ENCODE measurements at regions of chr6 and their contacts with region 1.

Region 1: DNA sequence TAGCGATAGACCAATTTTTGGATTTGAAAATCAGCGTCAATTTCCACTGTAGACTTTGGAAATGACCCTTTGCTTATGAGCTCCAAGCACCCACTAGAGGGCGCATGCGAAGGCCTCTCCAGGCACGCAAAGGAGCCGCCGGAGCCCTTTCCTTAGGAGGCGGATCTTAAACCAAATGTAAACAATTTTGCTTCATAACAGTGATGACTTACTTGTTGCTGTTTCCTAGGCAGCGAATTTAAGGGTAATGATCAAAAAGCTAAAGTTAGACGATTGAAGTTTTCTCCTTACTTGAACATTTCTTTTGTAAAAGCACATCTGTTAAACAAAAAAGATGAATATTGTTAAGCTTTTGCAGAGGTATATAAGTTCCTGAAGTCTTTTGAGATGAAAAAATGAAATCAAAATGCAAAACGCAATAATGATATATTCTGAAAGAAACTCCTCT is 29.2 kb upstream of the EXOC2 start:
- DNase-seq: peak; percentile 57 to 83 (median 66)
- ATAC-seq: peak in 3 of 4 donors; percentile 62 to 70 (median 64)
- H3K4me3 ChIP-seq: no peak overlapping the region
- H3K27ac ChIP-seq: no peak overlapping the region
- H3K4me1 ChIP-seq: peaks cover 0 to 9% (median 0%) of the 10 kb centered on the region in 12 donors
- H3K27me3 ChIP-seq: peaks cover 0 to 4% (median 0%) of the 10 kb centered on the region in 9 donors
- CTCF ChIP-seq: peak; percentile 79 to 97 (median 92)
- POLR2A ChIP-seq: no peak

Region 2: DNA sequence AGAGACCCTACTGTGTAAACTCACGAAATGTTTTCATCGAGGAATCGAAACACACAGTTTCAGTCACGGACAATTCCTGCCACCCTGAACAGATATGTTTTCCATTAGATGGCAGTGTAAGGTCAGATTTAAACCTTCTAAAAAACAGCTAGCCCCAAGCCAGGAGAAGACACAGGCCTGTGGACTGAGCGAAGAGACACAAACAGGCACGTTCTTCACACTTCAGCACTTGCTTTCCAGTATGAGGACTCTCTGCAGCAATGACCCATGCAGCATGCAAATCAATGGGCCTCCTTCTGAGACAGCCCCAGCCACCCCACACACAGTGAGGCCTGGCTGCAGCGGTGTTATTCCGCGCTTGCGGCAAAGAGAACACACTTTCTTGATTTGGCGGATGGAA is 97.1 kb before region 1 on chr6:
- intact Hi-C with region 1: loop called in 1 of 10 experiments (anchors 5 kb)
- DNase-seq: no peak
- ATAC-seq: peak; percentile 68 to 88 (median 76)
- H3K4me3 ChIP-seq: no peak overlapping the region
- H3K27ac ChIP-seq: peak overlapping the region in 1 of 12 donors; percentile 26
- H3K4me1 ChIP-seq: no peaks in the 10 kb centered on the region
- H3K27me3 ChIP-seq: no peaks in the 10 kb centered on the region
- CTCF ChIP-seq: peak in 7 of 12 donors; percentile 21 to 47 (median 35)
- POLR2A ChIP-seq: no peak

Region 3: DNA sequence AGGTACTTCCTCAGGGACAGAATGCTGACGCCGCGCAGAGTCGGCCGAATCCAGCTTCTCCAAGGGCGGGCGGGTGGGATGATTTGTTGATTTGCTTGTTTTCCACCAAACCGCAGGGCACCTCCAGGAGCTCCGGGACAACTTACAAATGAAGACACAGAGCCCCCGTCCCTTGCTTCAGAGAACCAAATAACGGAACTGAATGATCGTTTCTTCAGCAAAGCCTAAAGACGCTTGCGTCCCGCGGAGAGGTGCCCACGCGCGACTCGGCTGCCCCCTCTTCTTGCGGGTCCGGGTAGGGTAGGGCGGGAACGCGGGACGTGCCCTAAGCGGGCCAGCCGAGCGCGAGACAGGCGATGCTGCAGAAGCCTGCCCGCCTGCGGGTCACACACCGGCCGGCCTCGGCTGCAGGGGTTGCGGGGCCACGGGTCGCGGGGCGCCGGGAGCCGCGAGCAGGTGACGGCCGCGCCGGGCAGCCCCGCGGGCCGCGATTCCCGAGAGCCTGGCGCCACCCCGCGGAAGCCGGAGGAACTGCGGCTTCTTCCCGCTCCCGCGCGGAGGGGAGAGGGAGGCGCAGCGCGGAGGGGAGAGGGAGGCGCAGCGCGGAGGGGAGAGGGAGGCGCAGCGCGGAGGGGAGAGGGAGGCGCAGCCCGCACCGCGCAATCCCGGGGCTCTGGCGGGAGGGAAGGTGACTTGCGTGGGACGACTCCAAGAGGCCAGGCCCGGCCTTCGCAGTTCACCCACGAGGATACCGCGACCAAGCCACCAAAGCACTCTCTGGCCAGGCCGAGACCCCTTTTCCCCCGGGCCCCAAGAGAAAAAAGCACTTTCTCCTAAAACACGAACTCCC is 659.6 kb after region 1 on chr6:
- intact Hi-C with region 1: loop called in 3 of 10 experiments (anchors 5 to 10 kb)
- DNase-seq: peak in 1 of 5 donors; percentile 47
- ATAC-seq: peak; percentile 26 to 87 (median 70)
- H3K4me3 ChIP-seq: peak overlapping the region in 10 of 12 donors; percentile 10 to 46 (median 37)
- H3K27ac ChIP-seq: peak overlapping the region in 1 of 12 donors; percentile 84
- H3K4me1 ChIP-seq: peaks cover 0 to 50% (median 26%) of the 10 kb centered on the region in 12 donors
- H3K27me3 ChIP-seq: peaks cover 88 to 100% (median 97%) of the 10 kb centered on the region in 9 donors
- CTCF ChIP-seq: peak; percentile 62 to 94 (median 90)
- POLR2A ChIP-seq: no peak

Region 4: GRCh38 chr6:1396952-1397868 is 675.1 kb after region 1 on chr6:
- intact Hi-C with region 1: loop called in 2 of 10 experiments (anchors 5 to 10 kb)
- DNase-seq: peak in 4 of 5 donors; percentile 34 to 72 (median 56)
- ATAC-seq: peak in 2 of 4 donors; percentile 66 to 68
- H3K4me3 ChIP-seq: no peak overlapping the region
- H3K27ac ChIP-seq: no peak overlapping the region
- H3K4me1 ChIP-seq: peaks cover 0 to 19% (median 5%) of the 10 kb centered on the region in 12 donors
- H3K27me3 ChIP-seq: peaks cover 18 to 98% (median 75%) of the 10 kb centered on the region in 9 donors
- CTCF ChIP-seq: peak; percentile 84 to 97 (median 95)
- POLR2A ChIP-seq: no peak

Region 5: GRCh38 chr6:1436334-1437306 is 714.5 kb after region 1 on chr6:
- intact Hi-C with region 1: loop called in 1 of 10 experiments (anchors 5 kb)
- DNase-seq: no peak
- ATAC-seq: peak; percentile 69 to 84 (median 80)
- H3K4me3 ChIP-seq: no peak overlapping the region
- H3K27ac ChIP-seq: no peak overlapping the region
- H3K4me1 ChIP-seq: peaks cover 0 to 5% (median 0%) of the 10 kb centered on the region in 12 donors
- H3K27me3 ChIP-seq: peaks cover 0 to 54% (median 23%) of the 10 kb centered on the region in 9 donors
- CTCF ChIP-seq: peak; percentile 63 to 81 (median 72)
- POLR2A ChIP-seq: no peak